PC-9 (cell line): ENCODE measurements at regions of chr6 and their contacts with region 1.

Region 1: DNA sequence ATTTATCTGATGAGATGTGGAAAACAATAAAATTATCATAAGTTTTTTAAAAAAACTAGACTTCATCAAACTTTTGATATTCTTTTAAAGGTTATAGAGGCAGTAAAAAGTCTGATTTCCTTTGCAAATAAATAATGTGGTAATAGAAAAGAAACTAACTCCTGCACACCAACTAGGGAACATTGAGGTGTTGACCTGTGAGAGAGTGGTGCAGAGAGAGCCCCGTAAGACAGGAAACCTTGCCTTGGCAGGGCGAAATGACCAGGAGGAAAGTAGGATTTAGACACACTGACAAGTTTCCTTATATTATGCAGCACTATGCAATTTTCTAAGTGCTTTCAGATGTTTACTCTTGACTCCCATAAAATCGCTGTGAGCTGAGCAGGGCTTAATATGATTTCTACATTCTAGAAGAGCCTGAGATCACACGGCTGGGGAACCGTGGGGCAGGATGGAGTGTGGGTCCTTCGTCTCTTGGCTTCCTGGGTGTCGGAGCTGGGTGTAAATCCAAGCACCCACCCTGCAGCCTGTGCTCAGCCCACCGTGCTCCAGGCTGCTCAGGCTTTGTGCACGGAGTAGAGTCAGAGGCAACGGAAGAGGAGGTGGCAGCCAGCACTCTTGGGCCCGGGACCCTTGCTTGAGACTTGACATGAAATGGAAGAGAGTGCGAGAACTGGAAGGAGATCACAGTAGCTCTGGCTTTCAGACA is 61.3 kb upstream of the FOXQ1 start:
- DNase-seq: peak in 1 of 2 experiments; percentile 48
- H3K4me3 ChIP-seq: peak overlapping the region; percentile 42; the same call in 1 of the 2 replicates
- H3K27ac ChIP-seq: peak overlapping the region; percentile 94
- H3K4me1 ChIP-seq: peaks cover 39% of the 10 kb centered on the region
- H3K27me3 ChIP-seq: no peaks in the 10 kb centered on the region
- CTCF ChIP-seq: no peak

Region 2: GRCh38 chr6:925656-926213 is 324.9 kb before region 1 on chr6:
- CTCF ChIA-PET with region 1: no interaction called
- POLR2A ChIA-PET with region 1: no interaction called
- intact Hi-C with region 1: no loop called
- DNase-seq: no peak
- H3K4me3 ChIP-seq: no peak overlapping the region
- H3K27ac ChIP-seq: no peak overlapping the region
- H3K4me1 ChIP-seq: no peaks in the 10 kb centered on the region
- H3K27me3 ChIP-seq: no peaks in the 10 kb centered on the region
- CTCF ChIP-seq: no peak

Region 3: DNA sequence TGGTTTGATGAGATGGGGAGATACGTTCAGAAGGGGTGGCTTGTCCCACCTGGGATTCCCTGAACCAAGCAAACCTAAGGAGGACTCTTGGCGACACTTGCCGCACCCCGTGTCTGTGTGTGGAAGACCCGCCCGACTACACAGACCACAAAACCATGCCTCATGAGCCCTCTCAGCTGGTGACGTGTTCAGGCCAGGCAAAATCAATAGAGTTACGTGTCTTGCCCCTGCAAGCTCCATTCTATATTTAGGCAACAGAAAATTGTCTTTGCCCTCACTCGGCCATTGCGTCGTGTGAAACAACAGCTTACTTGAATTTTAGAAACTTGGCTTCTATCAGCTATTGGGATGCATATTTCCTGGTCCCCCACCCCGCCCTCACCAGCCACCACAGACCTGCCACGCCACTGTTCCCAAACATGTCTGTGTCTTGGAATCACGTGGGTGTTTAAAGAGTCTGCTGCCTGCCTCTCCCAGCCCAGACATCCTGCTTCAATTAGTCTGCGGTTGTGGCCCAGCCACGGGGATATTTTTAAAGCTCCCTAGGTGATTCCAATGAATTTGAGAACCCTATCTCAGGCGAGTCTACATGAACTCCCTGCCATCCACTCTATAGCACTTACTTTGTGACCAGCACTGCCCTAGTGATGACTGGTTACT is 278.5 kb before region 1 on chr6:
- CTCF ChIA-PET with region 1: no interaction called
- POLR2A ChIA-PET with region 1: no interaction called
- intact Hi-C with region 1: no loop called
- DNase-seq: no peak
- H3K4me3 ChIP-seq: no peak overlapping the region
- H3K27ac ChIP-seq: no peak overlapping the region
- H3K4me1 ChIP-seq: no peaks in the 10 kb centered on the region
- H3K27me3 ChIP-seq: no peaks in the 10 kb centered on the region
- CTCF ChIP-seq: no peak

Region 4: GRCh38 chr6:1208876-1209275 is 41.8 kb before region 1 on chr6:
- CTCF ChIA-PET with region 1: no interaction called
- POLR2A ChIA-PET with region 1: no interaction called
- intact Hi-C with region 1: loop called (anchors 5 kb)
- DNase-seq: peak; percentile 30 to 79
- H3K4me3 ChIP-seq: no peak overlapping the region
- H3K27ac ChIP-seq: peak overlapping the region; percentile 44; the same call in 1 of the 2 replicates
- H3K4me1 ChIP-seq: peaks cover 13% of the 10 kb centered on the region
- H3K27me3 ChIP-seq: no peaks in the 10 kb centered on the region
- CTCF ChIP-seq: no peak

Region 5: GRCh38 chr6:1325461-1326309 is 75.0 kb after region 1 on chr6:
- CTCF ChIA-PET with region 1: no interaction called
- POLR2A ChIA-PET with region 1: interaction called, 6 read pairs
- intact Hi-C with region 1: loop called (anchors 2 kb)
- DNase-seq: peak; percentile 91 to 98
- H3K4me3 ChIP-seq: peak overlapping the region; percentile 31; the same call in 1 of the 2 replicates
- H3K27ac ChIP-seq: peak overlapping the region; percentile 100
- H3K4me1 ChIP-seq: peaks cover 80% of the 10 kb centered on the region
- H3K27me3 ChIP-seq: no peaks in the 10 kb centered on the region
- CTCF ChIP-seq: no peak